CD8-positive, alpha-beta memory T cell (primary cell): ENCODE measurements at regions of chr12 and their contacts with region 1.

Region 1: DNA sequence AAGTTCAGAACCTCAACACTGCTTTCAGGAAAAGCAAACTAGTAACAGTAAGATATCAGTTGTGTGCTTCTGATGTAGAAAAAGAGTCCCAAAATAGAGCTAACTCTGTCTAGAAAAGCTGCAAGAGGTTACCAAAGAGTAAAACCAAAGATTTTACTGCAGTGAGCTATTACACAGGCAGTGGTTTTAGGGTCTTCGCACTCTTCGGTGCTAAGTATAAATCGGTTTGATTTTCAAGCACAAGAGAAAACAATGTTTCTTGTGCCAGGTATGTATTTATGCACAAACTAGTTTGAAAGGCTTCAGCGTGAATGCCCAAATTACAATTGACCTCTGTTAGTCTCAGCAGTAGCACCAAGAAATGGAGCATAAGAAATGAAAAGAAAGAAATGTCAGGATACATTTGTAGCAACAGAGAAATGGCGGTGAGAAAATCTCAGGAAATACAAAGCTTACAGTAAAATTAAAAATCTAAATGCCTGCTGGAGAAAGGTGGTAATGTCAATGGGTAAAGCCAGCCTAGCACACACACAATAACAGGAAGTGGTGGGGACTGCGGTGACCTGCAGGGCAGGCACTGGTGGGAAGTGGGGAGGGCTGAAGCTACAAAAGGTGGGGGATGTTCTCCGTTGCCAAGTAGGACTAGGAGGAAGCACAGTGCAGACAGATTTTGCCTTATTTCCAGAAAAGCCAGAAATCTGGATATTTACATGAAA is 18.0 kb upstream of the DYRK2 start:
- DNase-seq: peak; percentile 82 to 96 (median 93)
- H3K4me3 ChIP-seq: peak overlapping the region; percentile 15
- H3K4me3 Mint-ChIP-seq: peak overlapping the region; percentile 48 to 88 (median 68)
- H3K27ac ChIP-seq: peak overlapping the region; percentile 29
- H3K27ac Mint-ChIP-seq: peak overlapping the region; percentile 74 to 96 (median 86)
- H3K4me1 ChIP-seq: peaks cover 93% of the 10 kb centered on the region
- H3K4me1 Mint-ChIP-seq: peaks cover 85 to 96% (median 96%) of the 10 kb centered on the region in 3 donors
- H3K27me3 ChIP-seq: no peaks in the 10 kb centered on the region
- H3K27me3 Mint-ChIP-seq: no peaks in the 10 kb centered on the region

Region 2: DNA sequence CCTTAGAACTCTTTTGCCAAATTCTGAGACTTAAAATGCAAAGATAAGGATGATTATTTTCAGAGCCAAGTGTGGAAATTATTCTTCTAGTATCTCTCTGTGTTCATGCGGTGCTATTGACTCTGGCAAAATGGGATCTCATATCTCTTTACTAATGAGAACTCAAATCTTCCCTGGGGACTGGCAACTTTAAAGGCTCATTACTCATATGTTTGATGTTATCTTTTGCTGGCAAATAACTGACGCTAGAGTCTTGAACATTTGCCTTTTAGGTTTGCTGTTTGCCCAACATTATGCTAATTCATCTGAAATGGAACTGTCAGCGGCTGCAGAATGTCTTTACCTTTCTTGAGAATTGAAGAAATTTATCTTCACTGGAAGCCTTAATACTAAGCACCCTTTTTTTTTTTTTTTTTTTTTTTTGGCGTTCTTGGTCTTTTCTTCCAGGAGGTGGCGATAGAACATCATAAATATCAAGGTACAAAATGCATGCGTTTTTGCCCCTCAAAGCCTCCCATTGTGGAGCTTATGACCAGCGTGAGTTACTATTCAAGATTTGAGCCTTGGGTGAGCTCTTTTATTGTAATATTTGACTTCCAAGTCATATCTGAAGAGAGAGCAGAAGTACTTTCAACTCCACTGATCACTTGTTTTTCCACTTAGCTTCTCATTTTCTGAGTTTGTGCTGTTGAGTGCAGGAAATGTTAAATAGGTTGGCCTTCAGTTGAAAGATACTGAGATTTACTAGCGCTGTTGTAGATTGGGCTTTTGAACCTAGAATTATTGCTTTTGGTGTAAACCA is 274.8 kb before region 1 on chr12:
- CTCF ChIA-PET with region 1: interaction called, 13 read pairs
- POLR2A ChIA-PET with region 1: interaction called, 3 read pairs
- DNase-seq: peak in 2 of 5 donors; percentile 43 to 45
- H3K4me3 ChIP-seq: no peak overlapping the region
- H3K4me3 Mint-ChIP-seq: peak overlapping the region in 1 of 7 donors; percentile 34
- H3K27ac ChIP-seq: no peak overlapping the region
- H3K27ac Mint-ChIP-seq: peak overlapping the region in 1 of 8 donors; percentile 2
- H3K4me1 ChIP-seq: peaks cover 4% of the 10 kb centered on the region
- H3K4me1 Mint-ChIP-seq: peaks cover 9 to 15% (median 10%) of the 10 kb centered on the region in 3 donors
- H3K27me3 ChIP-seq: no peaks in the 10 kb centered on the region
- H3K27me3 Mint-ChIP-seq: peaks cover 0 to 3% of the 10 kb centered on the region in 2 donors

Region 3: DNA sequence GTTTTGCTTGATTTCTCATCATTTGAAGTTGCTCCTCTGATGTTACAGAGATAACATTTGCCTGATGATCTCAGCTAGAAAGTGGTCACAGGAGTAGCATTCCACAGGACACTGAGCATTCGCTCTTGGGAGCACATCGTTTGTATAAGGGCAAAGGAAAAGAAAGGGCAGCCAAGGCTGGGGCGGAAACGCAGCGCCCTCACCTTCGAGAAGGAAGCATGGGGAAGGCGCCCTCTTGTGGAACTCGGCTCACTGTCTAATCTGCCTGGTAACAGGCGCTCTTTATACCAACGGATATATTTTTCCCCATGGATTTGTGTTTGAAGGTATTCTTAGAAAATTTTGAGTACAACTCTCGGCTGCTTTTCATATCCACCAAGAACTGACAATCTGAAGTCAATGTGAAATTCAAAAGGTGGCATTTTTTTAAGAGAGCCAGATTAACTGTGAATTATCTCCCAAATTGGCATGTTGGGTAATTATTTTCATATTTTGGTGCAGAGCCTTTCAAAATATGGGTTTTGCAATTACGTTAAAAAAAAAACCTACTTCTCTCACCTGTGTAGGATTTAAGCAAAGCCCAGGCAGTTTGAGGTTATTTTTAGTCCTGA is 188.7 kb before region 1 on chr12:
- CTCF ChIA-PET with region 1: interaction called, 13 read pairs
- POLR2A ChIA-PET with region 1: no interaction called
- DNase-seq: peak; percentile 53 to 81 (median 59)
- H3K4me3 ChIP-seq: peak overlapping the region; percentile 37
- H3K4me3 Mint-ChIP-seq: peak overlapping the region in 6 of 7 donors; percentile 44 to 72 (median 62)
- H3K27ac ChIP-seq: no peak overlapping the region
- H3K27ac Mint-ChIP-seq: peak overlapping the region in 6 of 8 donors; percentile 39 to 79 (median 66)
- H3K4me1 ChIP-seq: peaks cover 14% of the 10 kb centered on the region
- H3K4me1 Mint-ChIP-seq: peaks cover 23 to 34% (median 28%) of the 10 kb centered on the region in 3 donors
- H3K27me3 ChIP-seq: no peaks in the 10 kb centered on the region
- H3K27me3 Mint-ChIP-seq: peaks cover 0 to 1% of the 10 kb centered on the region in 2 donors

Region 4: GRCh38 chr12:67482751-67483671 is 147.5 kb before region 1 on chr12:
- CTCF ChIA-PET with region 1: interaction called, 12 read pairs
- POLR2A ChIA-PET with region 1: interaction called, 11 read pairs
- DNase-seq: peak; percentile 51 to 89 (median 76)
- H3K4me3 ChIP-seq: no peak overlapping the region
- H3K4me3 Mint-ChIP-seq: peak overlapping the region in 6 of 7 donors; percentile 27 to 83 (median 44)
- H3K27ac ChIP-seq: no peak overlapping the region
- H3K27ac Mint-ChIP-seq: peak overlapping the region; percentile 73 to 95 (median 87)
- H3K4me1 ChIP-seq: peaks cover 47% of the 10 kb centered on the region
- H3K4me1 Mint-ChIP-seq: peaks cover 34 to 52% (median 49%) of the 10 kb centered on the region in 3 donors
- H3K27me3 ChIP-seq: no peaks in the 10 kb centered on the region
- H3K27me3 Mint-ChIP-seq: no peaks in the 10 kb centered on the region

Region 5: GRCh38 chr12:67515679-67516340 is 114.7 kb before region 1 on chr12:
- CTCF ChIA-PET with region 1: interaction called, 10 read pairs
- POLR2A ChIA-PET with region 1: interaction called, 10 read pairs
- DNase-seq: peak in 4 of 5 donors; percentile 5 to 66 (median 42)
- H3K4me3 ChIP-seq: peak overlapping the region; percentile 36
- H3K4me3 Mint-ChIP-seq: peak overlapping the region; percentile 7 to 80 (median 72)
- H3K27ac ChIP-seq: no peak overlapping the region
- H3K27ac Mint-ChIP-seq: peak overlapping the region; percentile 25 to 94 (median 75)
- H3K4me1 ChIP-seq: peaks cover 44% of the 10 kb centered on the region
- H3K4me1 Mint-ChIP-seq: peaks cover 42 to 70% (median 57%) of the 10 kb centered on the region in 3 donors
- H3K27me3 ChIP-seq: no peaks in the 10 kb centered on the region
- H3K27me3 Mint-ChIP-seq: no peaks in the 10 kb centered on the region

Region 6: DNA sequence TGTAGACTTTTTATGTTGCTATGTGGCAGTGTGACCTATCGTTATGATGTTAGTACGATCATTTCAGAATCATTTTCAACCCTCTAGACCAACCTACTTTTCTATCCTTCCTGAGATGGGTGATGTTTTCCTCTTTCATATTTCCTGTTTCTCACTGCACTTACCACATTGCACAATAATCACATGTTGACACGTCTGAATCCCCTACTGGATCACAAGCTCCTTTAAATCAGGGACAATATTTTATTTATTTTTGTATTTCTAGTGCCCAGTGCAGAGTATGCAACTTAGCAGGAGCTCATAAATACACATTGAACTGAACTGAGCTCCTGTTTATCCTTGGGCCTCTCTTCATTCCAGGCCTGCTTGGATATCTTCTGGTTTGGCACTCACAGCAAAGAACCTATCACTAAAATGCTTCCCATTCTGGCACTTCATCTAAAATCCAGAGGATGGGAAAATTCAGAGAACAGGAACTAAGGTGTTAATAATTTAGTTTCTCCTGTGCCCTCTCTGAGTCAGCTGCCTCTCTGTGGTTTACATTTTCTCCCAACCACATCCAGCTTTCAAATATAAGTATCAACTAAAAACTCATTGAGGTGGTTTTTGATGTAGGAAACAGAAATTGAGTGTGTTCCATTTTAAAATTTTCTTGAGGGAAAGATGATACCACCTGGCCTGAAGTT is 51.4 kb before region 1 on chr12:
- CTCF ChIA-PET with region 1: interaction called, 18 read pairs
- POLR2A ChIA-PET with region 1: interaction called, 13 read pairs
- DNase-seq: peak in 2 of 5 donors; percentile 56 to 70
- H3K4me3 ChIP-seq: peak overlapping the region; percentile 20
- H3K4me3 Mint-ChIP-seq: peak overlapping the region; percentile 43 to 86 (median 72)
- H3K27ac ChIP-seq: no peak overlapping the region
- H3K27ac Mint-ChIP-seq: peak overlapping the region; percentile 47 to 97 (median 84)
- H3K4me1 ChIP-seq: peaks cover 38% of the 10 kb centered on the region
- H3K4me1 Mint-ChIP-seq: peaks cover 52 to 67% (median 59%) of the 10 kb centered on the region in 3 donors
- H3K27me3 ChIP-seq: no peaks in the 10 kb centered on the region
- H3K27me3 Mint-ChIP-seq: peaks cover 0 to 2% of the 10 kb centered on the region in 2 donors

Region 7: GRCh38 chr12:67648521-67649260 is 18.2 kb after region 1 on chr12 and contains the start of gene DYRK2:
- CTCF ChIA-PET with region 1: interaction called, 18 read pairs
- POLR2A ChIA-PET with region 1: interaction called, 78 read pairs
- DNase-seq: peak; percentile 68 to 86 (median 79)
- H3K4me3 ChIP-seq: peak within 1 kb of the TSS; percentile 94
- H3K4me3 Mint-ChIP-seq: peak within 1 kb of the TSS; percentile 94 to 100 (median 99)
- H3K27ac ChIP-seq: peak within 1 kb of the TSS; percentile 81
- H3K27ac Mint-ChIP-seq: peak within 1 kb of the TSS; percentile 82 to 99 (median 92)
- H3K4me1 ChIP-seq: peaks cover 32% of the 10 kb centered on the region
- H3K4me1 Mint-ChIP-seq: peaks cover 39 to 46% (median 45%) of the 10 kb centered on the region in 3 donors
- H3K27me3 ChIP-seq: no peaks in the 10 kb centered on the region
- H3K27me3 Mint-ChIP-seq: no peaks in the 10 kb centered on the region
- total RNA-seq, gene DYRK2: 44.7 to 47.6 TPM

Region 8: DNA sequence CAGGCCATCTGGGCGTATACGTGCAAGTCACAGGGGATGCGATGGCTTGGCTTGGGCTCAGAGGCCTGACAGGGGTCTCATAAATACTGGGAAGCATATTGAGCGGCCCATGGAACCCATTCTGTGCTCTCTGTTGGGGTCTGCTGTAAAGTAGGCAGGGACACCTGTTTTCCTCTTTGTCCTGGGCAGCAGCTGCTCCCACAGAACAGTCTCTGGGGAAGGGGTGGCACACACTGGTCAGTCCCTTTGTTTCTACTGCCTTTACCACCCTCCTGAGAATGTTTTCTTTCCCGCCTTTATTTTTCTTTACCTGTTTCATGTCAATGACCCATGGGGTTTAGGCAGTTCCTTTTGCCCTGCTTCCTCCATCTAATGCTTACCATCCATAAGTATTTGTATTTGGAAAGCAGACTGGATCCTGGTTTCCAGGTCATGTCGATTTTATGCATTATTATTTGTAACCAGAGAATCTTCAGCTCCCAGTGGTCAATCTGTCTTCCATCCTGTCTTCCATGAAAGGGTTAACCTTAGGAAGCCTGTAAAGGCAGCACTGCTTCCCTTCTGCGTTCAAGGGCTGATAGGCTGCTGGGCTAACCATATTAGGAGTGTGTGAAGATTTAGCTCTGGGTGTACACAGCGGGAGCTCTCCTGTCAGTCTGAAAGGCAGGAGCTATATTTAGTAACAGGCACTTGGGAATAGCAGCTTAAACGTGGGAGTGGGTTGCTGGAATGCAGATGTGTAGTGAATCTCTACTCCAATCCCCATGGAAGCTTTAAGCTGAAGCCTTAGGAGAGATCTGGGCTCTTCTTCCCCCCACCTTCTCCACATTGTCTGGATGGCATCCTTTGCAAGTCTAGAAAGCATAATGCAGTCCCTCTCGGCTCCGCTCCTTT is 142.0 kb after region 1 on chr12:
- CTCF ChIA-PET with region 1: no interaction called
- POLR2A ChIA-PET with region 1: no interaction called
- DNase-seq: no peak
- H3K4me3 ChIP-seq: no peak overlapping the region
- H3K4me3 Mint-ChIP-seq: no peak overlapping the region
- H3K27ac ChIP-seq: no peak overlapping the region
- H3K27ac Mint-ChIP-seq: no peak overlapping the region
- H3K4me1 ChIP-seq: no peaks in the 10 kb centered on the region
- H3K4me1 Mint-ChIP-seq: no peaks in the 10 kb centered on the region
- H3K27me3 ChIP-seq: no peaks in the 10 kb centered on the region
- H3K27me3 Mint-ChIP-seq: no peaks in the 10 kb centered on the region